A549 (cell line): ENCODE measurements at regions of chr12 and their contacts with region 1.

Region 1: GRCh38 chr12:92505254-92506231 is 197.2 kb upstream of the PLEKHG7 start:
- DNase-seq: no peak
- ATAC-seq: no peak
- H3K4me3 ChIP-seq: no peak overlapping the region
- H3K27ac ChIP-seq: peak overlapping the region in 1 of 2 experiments; percentile 57; a peak in 3 of 6 replicates
- H3K4me1 ChIP-seq: peaks cover 40% of the 10 kb centered on the region
- CTCF ChIP-seq: no peak
- EP300 ChIP-seq: no peak
- POLR2A ChIP-seq: no peak
- RAD21 ChIP-seq: no peak

Region 2: DNA sequence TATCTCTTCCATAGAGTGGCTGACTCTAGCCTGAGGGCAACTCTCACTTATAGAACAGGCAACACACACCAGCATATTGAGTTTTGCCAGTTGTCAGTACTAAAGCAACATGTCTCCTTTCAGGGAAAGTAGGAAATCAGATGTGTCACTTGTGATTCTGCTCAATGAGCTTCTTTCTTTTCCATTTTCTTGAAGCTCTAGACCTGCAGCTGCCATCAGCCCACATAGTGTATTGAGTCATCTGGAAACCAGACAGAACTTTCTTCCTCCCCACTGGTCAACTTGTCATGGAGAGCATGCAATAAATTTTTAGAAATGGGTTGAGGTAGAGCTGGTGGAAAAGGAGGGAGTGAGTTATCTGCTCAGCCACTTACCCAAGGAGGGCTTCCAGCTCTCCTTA is 11.7 kb before region 1 on chr12:
- CTCF ChIA-PET with region 1: interaction called, 15 read pairs
- POLR2A ChIA-PET with region 1: no interaction called
- DNase-seq: no peak
- ATAC-seq: no peak
- H3K4me3 ChIP-seq: no peak overlapping the region
- H3K27ac ChIP-seq: no peak overlapping the region
- H3K4me1 ChIP-seq: no peaks in the 10 kb centered on the region
- CTCF ChIP-seq: no peak
- EP300 ChIP-seq: no peak
- POLR2A ChIP-seq: no peak
- RAD21 ChIP-seq: no peak